ENCODE measurements at regions of chr12 and their contacts with region 1.

Region 1: GRCh38 chr12:54005853-54006686 is 2.7 kb upstream of the HOXC8 start:
- DNase-seq: peak; percentile 78 to 93 (median 85)
- ATAC-seq: peak; percentile 68 to 92 (median 89)
- H3K4me3 ChIP-seq: peak overlapping the region in 9 of 12 donors; percentile 10 to 49 (median 36)
- H3K27ac ChIP-seq: no peak overlapping the region
- H3K4me1 ChIP-seq: peaks cover 0 to 20% (median 11%) of the 10 kb centered on the region in 12 donors
- H3K27me3 ChIP-seq: peaks cover 63 to 100% (median 95%) of the 10 kb centered on the region in 9 donors
- CTCF ChIP-seq: peak; percentile 84 to 96 (median 94)
- POLR2A ChIP-seq: no peak

Region 2: GRCh38 chr12:53899232-53899631 is 106.8 kb before region 1 on chr12:
- intact Hi-C with region 1: no loop called
- DNase-seq: no peak
- ATAC-seq: no peak
- H3K4me3 ChIP-seq: no peak overlapping the region
- H3K27ac ChIP-seq: no peak overlapping the region
- H3K4me1 ChIP-seq: no peaks in the 10 kb centered on the region
- H3K27me3 ChIP-seq: peaks cover 0 to 75% (median 39%) of the 10 kb centered on the region in 9 donors
- CTCF ChIP-seq: no peak
- POLR2A ChIP-seq: no peak

Region 3: DNA sequence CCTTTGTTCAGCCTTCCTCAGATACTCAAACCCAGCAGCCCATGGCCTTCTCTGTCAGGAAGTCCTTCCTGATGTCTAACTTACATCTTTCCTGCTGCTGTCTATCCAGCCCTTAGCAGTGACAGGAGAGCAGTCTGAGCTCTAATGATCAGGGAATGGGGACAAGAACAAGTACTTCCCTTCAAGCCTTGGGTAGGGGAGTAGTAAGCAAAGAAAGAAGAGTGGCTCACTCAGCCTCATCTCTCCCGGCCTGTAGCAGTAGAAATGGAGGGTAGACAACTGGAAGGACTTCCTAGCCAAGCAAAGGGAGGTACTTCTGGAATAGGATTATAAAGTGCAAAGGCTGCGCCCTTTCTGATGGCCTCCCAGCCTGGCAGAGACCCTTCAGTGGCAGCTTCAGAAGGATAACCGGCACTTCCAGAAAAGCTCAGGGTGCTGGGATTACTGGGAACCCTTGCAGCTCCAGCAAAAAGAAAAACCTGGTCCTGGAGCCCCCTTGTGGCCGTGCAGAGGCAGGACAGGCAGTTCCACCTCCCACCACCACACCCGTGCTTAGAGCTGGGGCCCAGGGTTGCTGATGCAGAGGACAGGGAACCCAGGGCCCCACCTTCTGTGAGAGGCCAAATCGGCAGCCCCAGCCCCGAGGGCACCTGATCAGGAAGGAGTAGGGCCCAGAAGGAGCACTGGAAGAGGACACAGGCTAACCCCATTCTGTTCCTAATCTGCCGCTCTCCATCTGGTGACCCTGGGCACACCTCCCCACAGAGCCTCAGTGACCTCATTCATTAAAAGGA is 195.1 kb after region 1 on chr12:
- intact Hi-C with region 1: loop called in 4 of 10 experiments (anchors 1 to 2 kb)
- DNase-seq: peak; percentile 47 to 79 (median 64)
- ATAC-seq: peak; percentile 61 to 92 (median 80)
- H3K4me3 ChIP-seq: no peak overlapping the region
- H3K27ac ChIP-seq: no peak overlapping the region
- H3K4me1 ChIP-seq: no peaks in the 10 kb centered on the region
- H3K27me3 ChIP-seq: peaks cover 11 to 92% (median 35%) of the 10 kb centered on the region in 9 donors
- CTCF ChIP-seq: peak; percentile 81 to 96 (median 92)
- POLR2A ChIP-seq: no peak

Region 4: GRCh38 chr12:54379401-54380201 is 373.5 kb after region 1 on chr12:
- intact Hi-C with region 1: loop called in 1 of 10 experiments (anchors 10 kb)
- DNase-seq: peak; percentile 92 to 96 (median 93)
- ATAC-seq: peak; percentile 80 to 90 (median 83)
- H3K4me3 ChIP-seq: peak overlapping the region in 11 of 12 donors; percentile 10 to 75 (median 54)
- H3K27ac ChIP-seq: peak overlapping the region in 11 of 12 donors; percentile 49 to 84 (median 80)
- H3K4me1 ChIP-seq: peaks cover 0 to 63% (median 19%) of the 10 kb centered on the region in 12 donors
- H3K27me3 ChIP-seq: no peaks in the 10 kb centered on the region
- CTCF ChIP-seq: peak in 11 of 12 donors; percentile 100
- POLR2A ChIP-seq: peak in 1 of 2 donors; percentile 9

Measured in heart left ventricle (tissue), 16 donors.